ENCODE measurements at regions of chr22 and their contacts with region 1.

Region 1: GRCh38 chr22:36856121-36856791 is 4.5 kb upstream of the NCF4 start:
- DNase-seq: peak; percentile 12
- H3K4me3 ChIP-seq: no peak overlapping the region
- H3K27me3 ChIP-seq: peaks cover 10% of the 10 kb centered on the region
- CTCF ChIP-seq: peak; percentile 100

Region 2: GRCh38 chr22:36546092-36546804 is 310.0 kb before region 1 on chr22:
- CTCF ChIA-PET with region 1: interaction called, 78 read pairs
- POLR2A ChIA-PET with region 1: no interaction called
- DNase-seq: no peak
- H3K4me3 ChIP-seq: no peak overlapping the region
- H3K27me3 ChIP-seq: peaks cover 6% of the 10 kb centered on the region
- CTCF ChIP-seq: peak; percentile 71

Region 3: DNA sequence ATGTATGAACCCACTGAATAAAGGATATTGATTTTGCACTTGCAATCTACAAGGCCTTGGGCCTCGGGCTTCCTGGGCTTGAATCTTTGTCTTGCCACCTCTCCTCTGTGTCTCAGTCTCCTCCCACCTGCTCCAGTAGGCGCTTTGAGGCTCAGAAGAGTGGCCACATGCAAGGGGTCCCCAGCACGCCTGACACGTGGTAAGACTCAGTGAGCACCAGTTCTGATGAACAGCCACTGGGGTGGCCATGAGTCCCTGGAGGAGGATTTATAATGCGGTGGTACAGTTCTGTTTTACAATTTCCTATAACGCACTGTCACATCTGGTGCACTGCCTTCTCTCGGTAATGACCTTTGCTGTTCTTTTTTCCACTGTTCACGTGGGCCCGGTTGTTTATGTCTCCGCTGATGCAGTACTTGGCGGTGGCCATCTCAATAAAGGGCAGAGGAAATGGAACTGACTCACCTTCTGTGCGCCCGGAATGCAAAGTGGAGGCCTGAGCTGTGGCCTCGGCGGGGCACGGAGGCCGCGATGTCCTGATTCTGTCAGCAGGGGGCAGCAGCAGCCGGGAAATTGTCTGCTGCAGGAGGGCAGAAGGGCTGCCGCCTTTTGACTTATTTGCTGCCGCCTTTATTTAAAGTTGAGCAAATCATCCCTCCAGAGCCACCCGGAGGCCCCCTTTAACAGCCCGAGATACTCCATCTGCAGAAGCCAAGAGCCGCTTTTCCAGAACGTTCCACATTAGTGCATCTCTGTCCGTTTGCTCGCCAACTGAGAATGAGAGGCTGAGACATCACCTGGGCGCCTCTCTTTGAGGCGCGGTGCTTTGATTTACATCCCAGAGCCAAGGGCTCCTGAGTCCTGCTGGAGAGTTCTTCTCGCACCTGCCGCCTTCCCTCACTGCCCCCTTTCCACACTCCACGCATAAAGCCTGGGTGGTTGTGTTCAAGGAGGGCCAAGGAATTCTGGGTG is 74.3 kb before region 1 on chr22:
- CTCF ChIA-PET with region 1: interaction called, 89 read pairs
- POLR2A ChIA-PET with region 1: no interaction called
- DNase-seq: no peak
- H3K4me3 ChIP-seq: no peak overlapping the region
- H3K27me3 ChIP-seq: peaks cover 18% of the 10 kb centered on the region
- CTCF ChIP-seq: peak; percentile 91

Region 4: GRCh38 chr22:36833073-36833472 is 23.2 kb before region 1 on chr22:
- CTCF ChIA-PET with region 1: interaction called, 16 read pairs
- POLR2A ChIA-PET with region 1: no interaction called
- DNase-seq: no peak
- H3K4me3 ChIP-seq: no peak overlapping the region
- H3K27me3 ChIP-seq: 0 out of 2 replicates have a peak, but pooled peaks cover 2% of the 10 kb centered on the region
- CTCF ChIP-seq: no peak

Region 5: DNA sequence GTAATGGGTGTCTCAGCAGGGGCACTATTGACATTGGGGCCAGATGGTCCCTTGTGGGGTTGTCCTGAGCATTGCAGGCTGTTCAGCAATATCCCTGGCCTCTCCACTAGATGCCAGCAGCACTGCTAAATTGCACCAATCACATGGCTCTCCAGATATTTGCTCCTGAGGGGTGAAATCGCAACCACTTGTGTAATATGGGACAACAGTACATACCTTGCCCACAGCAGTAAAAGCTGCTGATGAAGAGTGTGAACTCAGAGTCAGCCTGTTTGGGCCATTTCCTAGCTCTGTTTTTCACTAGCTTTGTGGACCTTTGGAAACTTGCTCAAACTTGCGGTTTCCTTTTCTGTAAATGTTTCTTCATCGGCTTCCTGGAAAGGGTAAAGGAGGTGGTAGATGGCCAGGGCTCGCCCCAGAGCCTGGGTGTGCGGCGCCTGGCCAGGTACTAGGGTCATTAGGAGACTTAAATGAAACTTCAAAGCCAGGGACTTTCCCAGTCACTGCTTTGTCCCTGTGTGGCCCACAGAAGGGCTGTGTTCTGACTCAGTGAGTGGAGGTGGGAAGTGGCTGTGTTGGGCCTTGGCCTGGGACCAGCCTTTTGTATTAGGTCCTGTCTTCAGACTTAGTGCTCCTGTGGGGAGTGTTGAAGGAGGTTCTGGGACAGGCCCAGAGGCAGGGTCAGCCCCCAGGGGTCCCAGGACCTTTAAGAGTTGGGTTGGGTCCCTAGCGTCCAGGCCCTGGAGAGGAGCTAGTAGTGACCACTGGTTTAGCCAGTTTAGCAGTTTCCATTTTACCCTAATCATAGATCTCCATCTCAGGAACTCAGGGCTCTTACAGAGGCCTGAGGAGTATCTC is 17.7 kb after region 1 on chr22:
- CTCF ChIA-PET with region 1: interaction called, 42 read pairs
- POLR2A ChIA-PET with region 1: no interaction called
- DNase-seq: peak; percentile 2
- H3K4me3 ChIP-seq: no peak overlapping the region
- H3K27me3 ChIP-seq: peaks cover 13% of the 10 kb centered on the region
- CTCF ChIP-seq: peak; percentile 61

Region 6: DNA sequence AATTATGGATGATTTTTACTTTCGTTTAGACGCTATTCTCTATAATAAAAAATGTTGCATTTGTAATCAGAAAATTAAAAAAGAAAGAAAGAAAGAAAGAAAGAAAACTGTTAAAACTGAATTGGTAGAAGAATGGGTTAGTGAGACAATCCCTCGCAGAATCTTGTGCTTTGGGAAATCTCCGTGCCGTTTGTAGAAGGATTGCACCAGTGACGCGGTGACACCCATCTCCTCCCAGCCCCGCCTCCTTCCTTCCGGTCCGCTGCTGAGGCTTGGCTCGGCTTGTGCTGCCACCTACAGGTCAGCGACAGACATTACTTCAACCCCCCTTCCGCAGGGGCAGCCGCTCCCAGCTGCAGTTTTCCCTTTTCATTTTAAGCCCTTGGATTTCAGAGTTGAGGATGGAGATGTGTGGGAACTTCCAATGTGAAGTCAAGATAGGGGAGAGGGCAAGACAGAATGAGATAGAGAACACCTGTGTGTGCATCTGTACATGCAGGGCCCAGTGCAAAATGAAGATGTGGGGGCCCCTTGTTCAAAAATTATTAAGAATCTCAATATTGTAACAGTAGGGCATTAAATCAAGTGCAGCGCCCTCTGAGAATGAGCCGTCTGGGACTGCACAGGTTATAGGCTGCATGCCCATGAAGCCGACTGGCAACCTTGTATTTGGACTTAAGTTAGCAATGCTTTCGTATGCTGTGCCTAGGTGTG is 121.8 kb after region 1 on chr22:
- CTCF ChIA-PET with region 1: interaction called, 33 read pairs
- POLR2A ChIA-PET with region 1: no interaction called
- DNase-seq: peak; percentile 12
- H3K4me3 ChIP-seq: peak overlapping the region; percentile 38
- H3K27me3 ChIP-seq: peaks cover 6% of the 10 kb centered on the region
- CTCF ChIP-seq: peak; percentile 91

Region 7: GRCh38 chr22:37048124-37048523 is 191.9 kb after region 1 on chr22:
- CTCF ChIA-PET with region 1: no interaction called
- POLR2A ChIA-PET with region 1: no interaction called
- DNase-seq: no peak
- H3K4me3 ChIP-seq: no peak overlapping the region
- H3K27me3 ChIP-seq: no peaks in the 10 kb centered on the region
- CTCF ChIP-seq: no peak